ENCODE measurements at regions of chr2 and their contacts with region 1.

Region 1: DNA sequence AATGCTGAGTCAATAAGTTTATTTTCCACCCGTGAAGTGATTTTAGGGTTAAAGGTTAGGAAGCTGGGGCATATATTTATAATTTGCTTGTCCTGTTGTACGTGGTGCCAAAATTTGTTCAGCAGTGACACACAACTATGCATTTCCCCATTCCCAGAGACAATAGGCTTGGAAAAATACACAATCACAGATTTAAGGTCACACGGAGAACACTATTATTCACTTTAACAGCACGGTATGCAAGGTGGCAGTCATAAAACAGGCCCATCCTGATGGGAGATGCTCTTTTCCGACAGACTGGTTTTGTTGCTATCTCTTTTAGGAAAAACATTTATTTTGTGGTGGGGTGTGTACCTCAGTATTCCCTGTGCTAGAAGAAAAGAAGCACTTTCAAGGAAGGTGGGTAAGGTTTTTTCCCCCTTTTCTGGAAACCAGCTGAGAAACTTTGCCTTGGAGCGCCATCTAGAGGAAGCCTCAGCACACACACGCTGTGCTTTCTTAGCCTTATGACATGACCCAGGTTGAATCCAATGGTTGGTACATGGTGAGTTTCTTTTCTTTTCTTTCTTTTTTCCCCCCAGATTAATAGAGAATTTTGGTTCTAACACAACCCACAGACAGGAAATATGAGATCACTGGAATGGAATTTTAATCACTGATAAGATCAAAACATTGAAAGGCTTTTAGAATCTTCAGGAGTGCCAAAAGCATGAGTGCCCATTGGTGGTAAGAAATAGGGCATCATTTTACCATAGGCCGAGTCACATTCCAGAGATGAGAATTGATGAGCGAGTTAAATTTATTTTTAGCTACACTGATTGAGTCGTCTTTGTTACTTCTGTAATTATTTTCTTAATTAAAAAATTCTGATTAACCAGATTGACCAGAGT is 332.1 kb downstream of the AGPS start:
- DNase-seq: peak; percentile 50
- CTCF ChIP-seq: peak; percentile 93

Region 2: DNA sequence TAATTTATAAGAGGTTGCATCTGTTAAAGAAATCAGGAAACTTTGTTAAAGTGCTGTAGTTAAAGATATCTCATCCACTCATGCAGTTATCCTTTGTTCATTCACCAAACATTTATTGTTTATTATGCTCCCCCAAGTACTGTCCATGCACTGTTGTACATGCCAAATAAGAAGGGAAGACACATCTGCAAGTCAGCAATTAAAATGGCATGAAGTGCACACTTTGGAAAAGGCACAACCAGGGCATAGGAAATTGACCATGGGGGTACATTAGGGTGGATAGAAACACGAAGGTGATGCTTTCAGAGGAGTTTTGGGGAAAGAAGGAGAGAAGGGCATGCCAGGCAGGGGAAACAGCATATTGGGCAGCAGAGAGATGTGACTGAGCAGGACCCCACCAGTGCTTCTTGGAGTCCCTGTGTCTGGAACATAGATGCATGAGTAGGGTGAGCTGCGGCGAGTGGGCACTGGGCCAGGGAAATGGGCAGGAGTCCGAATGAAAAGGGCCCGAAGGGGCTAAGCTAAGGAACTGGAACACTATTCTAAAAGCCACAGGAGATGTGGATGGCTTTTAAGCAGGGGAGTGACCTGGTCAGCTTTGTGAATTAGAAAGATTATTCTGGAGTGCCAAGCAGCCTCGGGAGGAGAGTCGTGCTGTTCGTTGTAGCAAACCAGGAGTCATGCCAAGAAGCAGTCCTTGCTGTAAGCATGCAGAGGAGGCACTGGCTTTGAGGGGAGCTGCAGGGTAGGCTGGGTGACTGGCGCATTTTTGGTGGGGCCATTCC is 15.8 kb before region 1 on chr2:
- CTCF ChIA-PET with region 1: interaction called, 29 read pairs
- POLR2A ChIA-PET with region 1: no interaction called
- DNase-seq: no peak
- CTCF ChIP-seq: no peak

Region 3: GRCh38 chr2:177735318-177735803 is 10.7 kb after region 1 on chr2:
- CTCF ChIA-PET with region 1: interaction called, 19 read pairs
- POLR2A ChIA-PET with region 1: no interaction called
- DNase-seq: no peak
- CTCF ChIP-seq: no peak

Region 4: GRCh38 chr2:177753682-177754491 is 29.2 kb after region 1 on chr2:
- CTCF ChIA-PET with region 1: interaction called, 10 read pairs
- POLR2A ChIA-PET with region 1: no interaction called
- DNase-seq: no peak
- CTCF ChIP-seq: no peak

Measured in GM10248 (cell line).